RWPE1 (cell line): ENCODE measurements at regions of chr5 and their contacts with region 1.

Region 1: GRCh38 chr5:82298668-82299067 is 20.5 kb upstream of the RPS23 start:
- DNase-seq: no peak
- H3K27ac ChIP-seq: no peak overlapping the region
- CTCF ChIP-seq: no peak

Region 2: GRCh38 chr5:82319192-82319591 is 20.5 kb after region 1 on chr5:
- CTCF ChIA-PET with region 1: no interaction called
- POLR2A ChIA-PET with region 1: interaction called, 11 read pairs
- DNase-seq: no peak
- H3K27ac ChIP-seq: no peak overlapping the region
- CTCF ChIP-seq: no peak